A549 (cell line): ENCODE measurements at regions of chr17 and their contacts with region 1.

Region 1: DNA sequence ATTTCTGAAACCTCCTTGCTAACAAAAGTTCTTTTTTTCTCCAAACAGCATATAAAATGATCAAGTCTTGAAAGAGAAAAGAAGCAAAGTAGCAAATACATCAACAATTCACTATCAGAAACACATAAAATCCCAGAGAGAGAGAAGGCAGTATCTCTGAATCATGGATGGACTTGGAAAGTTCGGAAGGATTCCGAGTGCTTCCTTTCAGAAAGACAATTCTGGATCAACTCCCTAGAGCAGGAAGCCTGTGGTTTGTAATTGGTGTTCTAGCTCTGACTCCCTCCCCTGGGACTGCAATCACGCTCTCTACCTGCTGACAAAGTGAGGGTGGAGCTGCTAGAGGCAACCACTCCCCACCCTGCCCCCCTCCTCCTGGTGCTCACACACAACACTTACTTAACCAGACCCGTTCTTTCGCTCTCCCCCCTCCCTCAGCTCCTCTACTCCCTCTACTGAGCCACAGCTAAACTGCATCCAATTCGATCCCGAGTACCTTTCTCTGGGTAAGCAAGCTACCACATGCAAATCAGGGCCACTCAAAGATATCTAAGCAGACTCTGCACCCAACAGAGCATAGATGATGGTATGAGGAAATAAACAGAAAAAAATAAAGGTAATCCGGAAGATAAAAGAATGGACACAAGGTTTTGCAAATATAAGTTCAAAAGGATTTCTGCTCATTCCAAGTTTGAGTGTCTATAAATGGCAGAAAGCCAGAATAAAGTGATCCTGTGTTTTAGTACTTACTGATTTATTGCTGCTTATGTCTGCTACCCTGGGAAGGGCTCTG is at the start of gene RNF43:
- DNase-seq: peak; percentile 96 to 98
- ATAC-seq: peak; percentile 98 to 99
- H3K4me3 ChIP-seq: peak within 1 kb of the TSS; percentile 47
- H3K27ac ChIP-seq: peak within 1 kb of the TSS; percentile 76 to 77
- H3K4me1 ChIP-seq: peaks cover 24% of the 10 kb centered on the region; the same call in 2 of the 3 replicates
- CTCF ChIP-seq: peak; percentile 86
- EP300 ChIP-seq: no peak
- POLR2A ChIP-seq: no peak
- RAD21 ChIP-seq: peak; percentile 92 to 95
- polyA plus RNA-seq, gene RNF43: 6.3 and 6.6 TPM in 2 replicates

Region 2: GRCh38 chr17:58224315-58224714 is 193.2 kb before region 1 on chr17:
- CTCF ChIA-PET with region 1: no interaction called
- POLR2A ChIA-PET with region 1: no interaction called
- DNase-seq: peak; percentile 16 to 47
- ATAC-seq: no peak; a peak in 1 of 6 replicates
- H3K4me3 ChIP-seq: no peak overlapping the region
- H3K27ac ChIP-seq: no peak overlapping the region
- H3K4me1 ChIP-seq: peaks cover 11% of the 10 kb centered on the region; the same call in 2 of the 3 replicates
- CTCF ChIP-seq: no peak
- EP300 ChIP-seq: no peak
- POLR2A ChIP-seq: no peak
- RAD21 ChIP-seq: no peak

Region 3: GRCh38 chr17:58352014-58352842 is 65.3 kb before region 1 on chr17 and contains the start of gene SUPT4H1:
- CTCF ChIA-PET with region 1: interaction called, 34 read pairs
- POLR2A ChIA-PET with region 1: interaction called, 87 read pairs
- DNase-seq: peak; percentile 95 to 99
- ATAC-seq: peak; percentile 97 to 99
- H3K4me3 ChIP-seq: peak within 1 kb of the TSS; percentile 83
- H3K27ac ChIP-seq: peak within 1 kb of the TSS; percentile 88 to 92
- H3K4me1 ChIP-seq: peaks cover 9% of the 10 kb centered on the region; the same call in 2 of the 3 replicates
- CTCF ChIP-seq: peak; percentile 4; the same call in 1 of the 3 replicates
- EP300 ChIP-seq: no peak; a peak in 1 of 5 replicates
- POLR2A ChIP-seq: peak; percentile 92
- RAD21 ChIP-seq: peak in 1 of 2 experiments; percentile 68; a peak in 3 of 5 replicates
- polyA plus RNA-seq, gene SUPT4H1: 241 and 260 TPM in 2 replicates

Region 4: GRCh38 chr17:58364270-58364942 is 53.1 kb before region 1 on chr17:
- CTCF ChIA-PET with region 1: interaction called, 38 read pairs
- POLR2A ChIA-PET with region 1: no interaction called
- DNase-seq: no peak
- ATAC-seq: peak in 1 of 2 experiments; percentile 39; a peak in 3 of 6 replicates
- H3K4me3 ChIP-seq: no peak overlapping the region
- H3K27ac ChIP-seq: peak overlapping the region; percentile 26 to 50; a peak in 4 of 6 replicates
- H3K4me1 ChIP-seq: peaks cover 18% of the 10 kb centered on the region
- CTCF ChIP-seq: no peak
- EP300 ChIP-seq: no peak
- POLR2A ChIP-seq: no peak
- RAD21 ChIP-seq: no peak

Region 5: GRCh38 chr17:58391302-58391984 is 26.1 kb before region 1 on chr17:
- CTCF ChIA-PET with region 1: interaction called, 24 read pairs
- POLR2A ChIA-PET with region 1: interaction called, 4 read pairs
- DNase-seq: peak; percentile 67 to 96
- ATAC-seq: peak; percentile 89 to 90
- H3K4me3 ChIP-seq: peak overlapping the region; percentile 4; the same call in 1 of the 3 replicates
- H3K27ac ChIP-seq: peak overlapping the region; percentile 77 to 84
- H3K4me1 ChIP-seq: peaks cover 72% of the 10 kb centered on the region
- CTCF ChIP-seq: no peak
- EP300 ChIP-seq: peak; percentile 90 to 95; a peak in 4 of 5 replicates
- POLR2A ChIP-seq: no peak
- RAD21 ChIP-seq: peak; percentile 24 to 66; a peak in 3 of 5 replicates

Region 6: GRCh38 chr17:58432806-58433572 is 15.5 kb after region 1 on chr17:
- CTCF ChIA-PET with region 1: interaction called, 10 read pairs
- POLR2A ChIA-PET with region 1: no interaction called
- DNase-seq: no peak
- ATAC-seq: no peak
- H3K4me3 ChIP-seq: no peak overlapping the region
- H3K27ac ChIP-seq: no peak overlapping the region
- H3K4me1 ChIP-seq: no peaks in the 10 kb centered on the region
- CTCF ChIP-seq: no peak
- EP300 ChIP-seq: no peak
- POLR2A ChIP-seq: no peak
- RAD21 ChIP-seq: no peak